Stomach (tissue), 19 donors: ENCODE measurements at regions of chr12 and their contacts with region 1.

Region 1: DNA sequence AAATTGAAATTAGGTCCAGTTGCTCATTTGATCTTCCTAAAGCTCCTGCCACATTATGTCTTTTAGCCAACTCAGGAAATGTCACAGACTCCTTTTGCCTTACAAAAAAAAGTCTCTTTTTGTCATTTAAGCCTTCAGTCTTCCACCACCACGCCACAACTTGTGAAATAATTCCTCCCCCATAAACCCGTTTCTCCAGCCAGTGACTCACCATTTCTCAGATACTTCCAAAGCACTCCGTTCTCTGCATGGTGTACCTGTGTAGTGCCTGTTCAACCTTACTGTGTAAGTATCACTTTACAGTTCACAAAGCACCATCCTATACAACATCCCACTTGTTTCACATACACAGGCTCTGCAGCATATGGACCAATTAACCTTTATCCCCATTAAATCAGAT is 139.5 kb upstream of the AEBP2 start:
- DNase-seq: no peak
- H3K4me3 ChIP-seq: no peak overlapping the region
- H3K27ac ChIP-seq: no peak overlapping the region
- H3K4me1 ChIP-seq: peaks cover 0 to 27% (median 4%) of the 10 kb centered on the region in 4 donors
- H3K27me3 ChIP-seq: no peaks in the 10 kb centered on the region
- CTCF ChIP-seq: no peak
- EP300 ChIP-seq: no peak
- POLR2A ChIP-seq: no peak

Region 2: DNA sequence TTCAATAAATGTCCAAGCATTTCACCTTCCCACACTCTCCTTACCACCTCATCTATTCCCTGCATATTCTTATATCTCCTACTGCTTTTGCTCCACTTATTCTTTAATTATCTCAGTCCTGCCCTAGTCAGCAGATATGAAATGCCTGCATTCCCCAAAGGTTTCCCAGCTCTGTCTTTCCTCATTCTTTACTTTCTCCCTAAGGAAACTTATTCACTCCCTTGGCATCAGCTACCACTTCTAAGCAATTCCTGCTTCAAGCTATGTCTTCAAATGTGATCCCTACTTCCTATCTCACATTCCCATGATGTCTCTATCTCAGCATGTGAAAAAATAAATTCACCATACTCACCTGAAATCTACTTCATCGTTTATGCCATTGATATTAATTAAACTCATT is 450.0 kb before region 1 on chr12:
- intact Hi-C with region 1: loop called (anchors 10 kb)
- DNase-seq: no peak
- H3K4me3 ChIP-seq: no peak overlapping the region
- H3K27ac ChIP-seq: no peak overlapping the region
- H3K4me1 ChIP-seq: no peaks in the 10 kb centered on the region
- H3K27me3 ChIP-seq: no peaks in the 10 kb centered on the region
- CTCF ChIP-seq: no peak
- EP300 ChIP-seq: no peak
- POLR2A ChIP-seq: no peak

Region 3: DNA sequence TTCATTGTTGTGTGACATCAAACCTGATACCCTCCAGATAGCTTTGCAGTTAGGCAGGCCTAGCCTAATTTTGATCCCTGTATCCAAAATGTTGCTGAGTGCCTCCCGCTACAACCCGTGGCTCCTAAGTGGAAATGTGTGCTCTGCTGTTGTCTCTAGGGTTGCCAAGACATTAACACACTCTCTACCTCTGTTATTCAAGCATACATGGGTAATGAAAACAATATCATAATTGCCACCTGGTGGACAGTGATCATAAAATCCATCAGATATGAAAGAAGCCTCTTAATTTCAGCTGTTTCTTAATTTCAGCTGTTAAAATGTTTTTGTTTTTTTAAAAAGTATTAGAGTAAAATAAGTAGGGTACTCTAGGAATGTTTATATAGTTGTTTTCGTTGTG is 76.7 kb before region 1 on chr12:
- intact Hi-C with region 1: no loop called
- DNase-seq: peak in 1 of 2 donors; percentile 32
- H3K4me3 ChIP-seq: no peak overlapping the region
- H3K27ac ChIP-seq: peak overlapping the region in 2 of 5 donors; percentile 18 to 45
- H3K4me1 ChIP-seq: peaks cover 0 to 39% (median 19%) of the 10 kb centered on the region in 4 donors
- H3K27me3 ChIP-seq: no peaks in the 10 kb centered on the region
- CTCF ChIP-seq: no peak
- EP300 ChIP-seq: no peak
- POLR2A ChIP-seq: no peak